Endothelial cell of umbilical vein (primary cell): ENCODE measurements at regions of chr7 and their contacts with region 1.

Region 1: GRCh38 chr7:140810830-140811556 is 113.7 kb downstream of the BRAF start:
- DNase-seq: peak; percentile 77
- H3K4me3 ChIP-seq: no peak overlapping the region
- H3K27ac ChIP-seq: no peak overlapping the region
- H3K4me1 ChIP-seq: peaks cover 2% of the 10 kb centered on the region
- H3K27me3 ChIP-seq: no peaks in the 10 kb centered on the region
- CTCF ChIP-seq: peak; percentile 62 to 65
- POLR2A ChIP-seq: no peak

Region 2: DNA sequence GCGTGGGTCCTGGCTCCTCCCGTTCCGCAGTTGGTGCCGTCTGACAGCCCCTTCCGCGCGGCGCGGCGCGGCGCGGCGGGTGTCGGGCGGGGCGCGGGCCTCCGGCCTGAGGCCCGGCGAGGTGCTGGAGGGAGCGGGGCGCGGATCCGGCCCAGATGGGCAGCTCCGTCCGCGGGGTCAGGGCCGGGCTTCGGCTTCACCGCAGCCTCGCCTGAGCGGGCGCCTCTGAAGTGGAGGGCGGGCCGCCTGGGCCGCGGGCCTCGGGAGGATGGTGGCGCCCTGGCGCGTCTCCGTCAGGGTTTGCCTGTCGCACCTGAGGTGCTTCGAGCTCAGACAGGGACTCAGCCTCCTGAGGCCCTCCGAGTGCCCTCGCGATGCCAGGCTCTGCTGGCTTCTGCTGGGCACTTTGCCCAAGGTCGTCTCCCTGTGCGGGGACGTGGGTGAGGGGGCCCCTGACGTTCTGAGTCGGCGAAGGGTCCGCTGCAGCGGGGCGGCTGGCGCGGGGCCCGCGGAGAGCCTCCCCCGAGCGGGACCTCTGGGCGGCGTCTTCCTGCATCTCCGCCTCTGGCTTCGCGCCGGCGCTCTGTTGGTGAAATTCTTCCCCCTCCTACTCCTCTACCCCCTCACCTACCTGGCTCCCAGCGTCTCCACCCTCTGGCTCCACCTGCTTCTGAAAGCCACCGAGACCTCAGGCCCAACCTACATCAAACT is 137.8 kb before region 1 on chr7:
- CTCF ChIA-PET with region 1: interaction called, 19 read pairs
- POLR2A ChIA-PET with region 1: no interaction called
- dilution Hi-C with region 1: no loop called
- intact Hi-C with region 1: no loop called
- DNase-seq: peak; percentile 28
- H3K4me3 ChIP-seq: peak overlapping the region; percentile 22 to 76 (median 45)
- H3K27ac ChIP-seq: no peak overlapping the region
- H3K4me1 ChIP-seq: peaks cover 8% of the 10 kb centered on the region
- H3K27me3 ChIP-seq: peaks cover 0 to 3% of the 10 kb centered on the region in 2 experiments
- CTCF ChIP-seq: no peak
- POLR2A ChIP-seq: no peak

Region 3: DNA sequence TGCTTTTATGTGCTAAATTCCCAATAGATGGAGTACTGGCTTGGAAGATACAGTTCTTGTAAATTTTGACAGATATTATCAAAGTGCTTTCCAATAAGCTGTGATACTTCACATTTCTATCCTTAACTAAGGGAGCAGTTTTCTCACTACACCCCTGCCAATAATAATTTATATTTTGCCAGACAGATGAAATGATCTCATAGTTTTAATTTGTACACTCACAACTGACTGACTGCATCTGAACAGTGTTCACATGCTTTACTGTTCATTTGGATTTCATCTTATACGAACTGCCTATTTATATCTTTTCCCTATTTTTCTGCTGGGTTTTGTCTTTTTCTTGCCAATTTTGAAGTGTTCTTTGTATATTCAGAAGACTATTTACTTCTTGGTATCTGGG is 17.7 kb after region 1 on chr7:
- CTCF ChIA-PET with region 1: interaction called, 32 read pairs
- POLR2A ChIA-PET with region 1: no interaction called
- dilution Hi-C with region 1: no loop called
- intact Hi-C with region 1: no loop called
- DNase-seq: no peak
- H3K4me3 ChIP-seq: no peak overlapping the region
- H3K27ac ChIP-seq: no peak overlapping the region
- H3K4me1 ChIP-seq: no peaks in the 10 kb centered on the region
- H3K27me3 ChIP-seq: no peaks in the 10 kb centered on the region
- CTCF ChIP-seq: no peak
- POLR2A ChIP-seq: no peak

Region 4: GRCh38 chr7:140841166-140841715 is 30.2 kb after region 1 on chr7:
- CTCF ChIA-PET with region 1: interaction called, 10 read pairs
- POLR2A ChIA-PET with region 1: no interaction called
- dilution Hi-C with region 1: no loop called
- intact Hi-C with region 1: no loop called
- DNase-seq: no peak
- H3K4me3 ChIP-seq: no peak overlapping the region
- H3K27ac ChIP-seq: no peak overlapping the region
- H3K4me1 ChIP-seq: no peaks in the 10 kb centered on the region
- H3K27me3 ChIP-seq: no peaks in the 10 kb centered on the region
- CTCF ChIP-seq: no peak
- POLR2A ChIP-seq: no peak

Region 5: GRCh38 chr7:140924019-140924820 is 113.2 kb after region 1 on chr7:
- CTCF ChIA-PET with region 1: interaction called, 32 read pairs
- POLR2A ChIA-PET with region 1: no interaction called
- dilution Hi-C with region 1: no loop called
- intact Hi-C with region 1: loop called (anchors 1 kb)
- DNase-seq: peak; percentile 85
- H3K4me3 ChIP-seq: peak overlapping the region; percentile 64 to 89 (median 88)
- H3K27ac ChIP-seq: peak overlapping the region; percentile 93
- H3K4me1 ChIP-seq: peaks cover 12% of the 10 kb centered on the region
- H3K27me3 ChIP-seq: peaks cover 3 to 4% of the 10 kb centered on the region in 2 experiments
- CTCF ChIP-seq: peak; percentile 37 to 56
- POLR2A ChIP-seq: peak; percentile 62

Region 6: DNA sequence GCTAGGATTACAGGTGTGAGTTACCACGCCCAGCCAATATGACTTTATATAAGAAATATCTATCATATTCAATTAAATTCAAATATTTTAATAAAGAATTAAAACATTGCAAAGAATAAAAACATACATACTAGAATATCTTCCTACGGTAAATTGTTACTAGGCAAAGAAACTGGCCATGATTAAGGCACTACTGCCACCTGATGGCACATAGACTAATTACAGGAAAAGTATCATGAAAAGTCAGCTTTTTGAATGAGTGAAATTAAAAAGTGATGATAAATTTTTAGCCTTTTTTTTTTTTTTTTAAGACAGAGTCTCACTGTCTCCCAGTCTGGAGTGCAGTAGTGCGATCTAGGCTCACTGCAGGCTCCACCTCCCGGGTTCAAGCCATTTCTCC is 172.8 kb after region 1 on chr7:
- CTCF ChIA-PET with region 1: interaction called, 38 read pairs
- POLR2A ChIA-PET with region 1: no interaction called
- dilution Hi-C with region 1: no loop called
- intact Hi-C with region 1: loop called (anchors 2 kb)
- DNase-seq: no peak
- H3K4me3 ChIP-seq: no peak overlapping the region
- H3K27ac ChIP-seq: no peak overlapping the region
- H3K4me1 ChIP-seq: no peaks in the 10 kb centered on the region
- H3K27me3 ChIP-seq: no peaks in the 10 kb centered on the region
- CTCF ChIP-seq: peak in 1 of 2 donors; percentile 3
- POLR2A ChIP-seq: no peak

Region 7: DNA sequence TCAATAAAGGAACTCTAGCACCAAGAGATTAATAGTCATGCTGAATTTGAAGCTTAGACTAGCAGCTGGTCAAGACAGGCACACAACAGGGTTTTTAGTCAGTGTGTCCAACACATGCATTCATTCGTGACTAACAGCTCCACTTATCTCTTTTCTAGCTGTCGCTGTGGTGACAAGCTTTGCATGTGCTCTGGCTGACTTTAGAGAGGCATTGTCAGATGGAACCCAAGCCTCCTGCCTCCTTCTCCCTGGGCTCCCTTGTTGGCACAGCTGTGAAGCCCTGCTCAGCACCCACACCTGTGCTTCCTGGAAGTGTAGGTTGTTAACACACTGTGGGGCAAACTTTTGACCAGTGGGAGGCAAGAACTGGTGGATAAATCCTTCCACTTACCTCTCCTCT is 730.4 kb after region 1 on chr7:
- CTCF ChIA-PET with region 1: interaction called, 14 read pairs
- POLR2A ChIA-PET with region 1: no interaction called
- dilution Hi-C with region 1: no loop called
- intact Hi-C with region 1: no loop called
- DNase-seq: no peak
- H3K4me3 ChIP-seq: no peak overlapping the region
- H3K27ac ChIP-seq: no peak overlapping the region
- H3K4me1 ChIP-seq: no peaks in the 10 kb centered on the region
- H3K27me3 ChIP-seq: peaks cover 2 to 10% of the 10 kb centered on the region in 2 experiments
- CTCF ChIP-seq: no peak
- POLR2A ChIP-seq: no peak